ENCODE measurements at regions of chr20 and their contacts with region 1.

Region 1: DNA sequence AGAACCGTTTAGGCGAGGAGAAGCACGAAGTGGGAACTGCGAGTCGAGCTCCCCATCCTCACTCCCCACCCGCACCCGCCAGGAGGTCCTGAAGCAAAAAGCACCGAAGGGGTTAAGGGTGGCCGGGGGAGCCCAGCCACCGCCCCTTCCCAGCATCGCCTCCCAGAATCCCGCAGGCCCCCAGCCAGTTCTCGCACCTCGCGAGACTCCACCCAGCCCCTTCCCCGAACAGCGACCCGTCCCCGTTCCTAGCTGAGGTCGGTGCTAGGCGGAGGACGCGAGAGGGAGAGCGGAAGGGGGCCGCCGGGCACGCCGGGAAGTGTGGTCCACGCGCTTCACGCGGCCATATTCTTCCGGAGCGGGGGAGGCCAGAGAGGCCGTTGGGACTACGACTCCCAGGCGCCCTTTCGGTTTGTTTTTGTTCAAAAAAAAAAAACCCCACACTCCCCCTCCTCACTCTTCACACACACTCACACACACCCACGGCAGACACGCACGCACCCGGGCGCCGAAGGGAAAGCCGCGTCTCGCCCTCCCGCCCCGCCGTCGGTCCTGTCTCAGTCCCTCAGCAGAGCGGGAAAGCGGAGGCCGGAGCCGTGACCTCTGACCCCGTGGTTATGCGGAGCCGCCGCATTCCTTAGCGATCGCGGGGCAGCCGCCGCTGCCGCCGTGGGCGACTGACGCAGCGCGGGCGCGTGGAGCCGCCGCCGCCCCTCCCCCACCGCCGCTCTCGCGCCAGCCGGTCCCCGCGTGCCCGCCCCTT is at the start of gene ASXL1:
- DNase-seq: peak; percentile 96
- H3K4me3 Mint-ChIP-seq: peak within 1 kb of the TSS; percentile 98
- H3K27ac Mint-ChIP-seq: peak within 1 kb of the TSS; percentile 100
- H3K4me1 Mint-ChIP-seq: peaks cover 67% of the 10 kb centered on the region
- H3K27me3 Mint-ChIP-seq: no peaks in the 10 kb centered on the region
- total RNA-seq, gene ASXL1: 136 and 142 TPM in 2 replicates

Region 2: DNA sequence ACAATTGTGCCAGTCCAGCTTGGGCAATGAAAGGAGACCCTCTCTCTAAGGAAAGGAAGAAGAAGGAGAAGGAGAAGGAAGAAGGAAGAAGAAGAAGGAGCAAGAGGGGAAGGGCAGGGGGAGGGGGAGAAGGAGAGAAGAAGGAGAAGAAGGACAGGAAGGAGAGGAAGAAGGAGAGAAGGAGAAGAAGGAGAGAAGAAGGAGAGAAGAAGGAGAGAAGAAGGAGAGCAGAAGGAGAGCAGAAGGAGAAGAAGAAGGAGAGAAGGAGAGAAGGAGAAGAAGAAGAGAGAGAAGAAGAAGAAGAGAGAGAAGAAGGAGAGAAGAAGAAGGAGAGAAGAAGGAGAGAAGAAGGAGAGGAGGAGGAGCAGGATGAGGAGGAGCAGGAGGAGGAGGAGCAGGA is 1027.2 kb before region 1 on chr20:
- intact Hi-C with region 1: no loop called
- DNase-seq: no peak
- H3K4me3 Mint-ChIP-seq: no peak overlapping the region
- H3K27ac Mint-ChIP-seq: no peak overlapping the region
- H3K4me1 Mint-ChIP-seq: no peaks in the 10 kb centered on the region
- H3K27me3 Mint-ChIP-seq: no peaks in the 10 kb centered on the region

Region 3: DNA sequence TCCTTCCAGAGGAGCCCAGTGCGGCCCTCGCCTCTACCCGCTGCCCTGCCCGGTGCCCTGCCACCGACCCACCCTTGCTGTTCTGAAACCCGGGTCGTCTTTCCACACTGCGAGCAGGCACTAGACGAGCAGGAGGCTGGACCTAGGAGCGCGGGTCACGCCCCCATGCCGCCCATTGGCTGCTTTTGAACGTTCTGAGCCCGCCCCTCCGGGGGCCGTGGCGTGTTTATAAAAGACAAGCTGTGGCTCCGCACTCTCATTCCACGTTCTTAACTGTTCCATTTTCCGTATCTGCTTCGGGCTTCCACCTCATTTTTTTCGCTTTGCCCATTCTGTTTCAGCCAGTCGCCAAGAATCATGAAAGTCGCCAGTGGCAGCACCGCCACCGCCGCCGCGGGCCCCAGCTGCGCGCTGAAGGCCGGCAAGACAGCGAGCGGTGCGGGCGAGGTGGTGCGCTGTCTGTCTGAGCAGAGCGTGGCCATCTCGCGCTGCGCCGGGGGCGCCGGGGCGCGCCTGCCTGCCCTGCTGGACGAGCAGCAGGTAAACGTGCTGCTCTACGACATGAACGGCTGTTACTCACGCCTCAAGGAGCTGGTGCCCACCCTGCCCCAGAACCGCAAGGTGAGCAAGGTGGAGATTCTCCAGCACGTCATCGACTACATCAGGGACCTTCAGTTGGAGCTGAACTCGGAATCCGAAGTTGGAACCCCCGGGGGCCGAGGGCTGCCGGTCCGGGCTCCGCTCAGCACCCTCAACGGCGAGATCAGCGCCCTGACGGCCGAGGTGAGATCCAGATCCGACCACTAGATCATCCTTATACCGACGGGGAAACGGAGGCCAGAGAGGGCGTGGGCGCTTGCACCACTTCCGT is 752.8 kb before region 1 on chr20 and contains the start of gene ID1:
- intact Hi-C with region 1: loop called (anchors 10 kb)
- DNase-seq: peak; percentile 87
- H3K4me3 Mint-ChIP-seq: peak within 1 kb of the TSS; percentile 91
- H3K27ac Mint-ChIP-seq: peak within 1 kb of the TSS; percentile 65
- H3K4me1 Mint-ChIP-seq: peaks cover 35% of the 10 kb centered on the region
- H3K27me3 Mint-ChIP-seq: peaks cover 54% of the 10 kb centered on the region
- total RNA-seq, gene ID1: 3.4 and 4.0 TPM in 2 replicates

Region 4: DNA sequence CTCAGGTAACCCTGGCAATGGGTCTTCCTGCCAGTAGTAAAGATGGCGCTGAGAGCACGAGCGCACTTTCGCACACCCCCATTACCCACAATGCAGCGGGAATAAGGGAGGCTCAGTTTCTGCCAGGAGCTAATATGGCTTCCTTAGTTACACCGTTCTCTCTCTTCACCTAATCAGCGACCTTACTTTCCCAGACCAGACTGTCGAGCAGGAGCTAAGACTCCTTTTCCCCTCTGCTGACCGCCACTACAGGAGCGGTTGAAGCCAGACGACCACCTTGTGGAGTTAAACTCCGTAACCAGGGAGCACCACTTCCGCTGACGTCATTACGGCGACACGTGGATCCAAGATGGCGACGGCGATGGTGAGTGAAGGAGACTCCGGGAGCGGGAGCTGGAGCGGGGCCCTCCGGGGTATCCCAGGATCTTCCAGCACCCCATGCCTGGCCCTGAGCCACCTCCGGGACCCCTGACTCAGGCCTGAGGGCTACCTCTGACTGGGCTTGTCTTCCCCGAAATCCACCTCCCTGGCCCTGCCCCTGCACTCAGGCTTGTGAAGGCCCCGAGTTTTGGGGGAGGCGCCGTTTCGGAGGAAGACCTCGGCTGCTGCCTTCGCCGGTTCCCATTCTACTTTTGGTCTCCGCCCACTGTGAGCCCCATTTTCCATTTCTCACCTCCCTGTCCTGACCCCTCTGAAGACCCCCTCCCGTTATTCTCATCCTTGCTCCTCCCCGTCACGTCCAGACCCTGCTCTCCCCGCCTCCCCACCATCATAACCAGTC is 248.5 kb before region 1 on chr20 and contains the start of gene TM9SF4:
- intact Hi-C with region 1: loop called (anchors 1 kb)
- DNase-seq: peak; percentile 84
- H3K4me3 Mint-ChIP-seq: peak within 1 kb of the TSS; percentile 92
- H3K27ac Mint-ChIP-seq: peak within 1 kb of the TSS; percentile 99
- H3K4me1 Mint-ChIP-seq: peaks cover 35% of the 10 kb centered on the region
- H3K27me3 Mint-ChIP-seq: peaks cover 4% of the 10 kb centered on the region
- total RNA-seq, gene TM9SF4: 49.5 and 49.6 TPM in 2 replicates

Region 5: GRCh38 chr20:32249030-32249738 is 108.9 kb before region 1 on chr20:
- intact Hi-C with region 1: loop called (anchors 1 kb)
- DNase-seq: peak; percentile 46
- H3K4me3 Mint-ChIP-seq: peak overlapping the region; percentile 32
- H3K27ac Mint-ChIP-seq: peak overlapping the region; percentile 94
- H3K4me1 Mint-ChIP-seq: peaks cover 58% of the 10 kb centered on the region
- H3K27me3 Mint-ChIP-seq: no peaks in the 10 kb centered on the region

Region 6: DNA sequence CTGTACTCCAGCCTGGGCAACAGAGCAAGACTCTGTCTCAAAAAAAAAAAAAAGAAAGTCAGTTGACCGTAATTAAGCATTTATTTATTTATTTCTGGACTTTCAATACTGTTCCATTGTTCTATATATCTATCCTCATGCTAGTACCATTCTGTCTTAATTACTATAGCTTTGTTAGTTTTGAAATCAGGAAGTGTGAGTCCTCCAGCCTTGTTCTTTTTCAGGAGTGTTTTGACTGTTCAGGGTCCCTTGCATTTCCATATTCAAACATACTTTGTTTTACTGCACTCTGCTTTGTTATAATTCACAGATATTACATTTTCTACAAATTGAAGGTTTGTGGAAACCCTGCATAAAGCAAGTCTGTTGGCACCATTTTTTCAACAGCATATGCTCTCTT is 36.7 kb before region 1 on chr20:
- intact Hi-C with region 1: loop called (anchors 5 kb)
- DNase-seq: no peak
- H3K4me3 Mint-ChIP-seq: no peak overlapping the region
- H3K27ac Mint-ChIP-seq: peak overlapping the region; percentile 61
- H3K4me1 Mint-ChIP-seq: peaks cover 9% of the 10 kb centered on the region
- H3K27me3 Mint-ChIP-seq: no peaks in the 10 kb centered on the region

Region 7: GRCh38 chr20:32387252-32387651 is 29.2 kb after region 1 on chr20:
- intact Hi-C with region 1: loop called (anchors 2 kb)
- DNase-seq: peak; percentile 55
- H3K4me3 Mint-ChIP-seq: no peak overlapping the region
- H3K27ac Mint-ChIP-seq: peak overlapping the region; percentile 59
- H3K4me1 Mint-ChIP-seq: peaks cover 68% of the 10 kb centered on the region
- H3K27me3 Mint-ChIP-seq: no peaks in the 10 kb centered on the region

Region 8: GRCh38 chr20:32484958-32485769 is 127.1 kb after region 1 on chr20:
- intact Hi-C with region 1: loop called (anchors 1 kb)
- DNase-seq: peak; percentile 72
- H3K4me3 Mint-ChIP-seq: peak overlapping the region; percentile 89
- H3K27ac Mint-ChIP-seq: peak overlapping the region; percentile 85
- H3K4me1 Mint-ChIP-seq: peaks cover 21% of the 10 kb centered on the region
- H3K27me3 Mint-ChIP-seq: peaks cover 7% of the 10 kb centered on the region

Measured in activated T-helper 1 cell treated with anti-CD3 and anti-CD28 coated beads, Interleukin-12 subunit alpha, Interleukin-12 subunit beta, Interleukin-2, Interleukin-4 antibody, amounts not matched to agents 30 ng/mL and 10 ng/mL and 1 ng/mL, durations not matched to agents 14 hours and 24 hours and 36 hours (primary cell).